Naive thymus-derived CD4-positive, alpha-beta T cell (primary cell): ENCODE measurements at regions of chr1 and their contacts with region 1.

Region 1: GRCh38 chr1:234730770-234731568 is 121.0 kb upstream of the IRF2BP2 start:
- DNase-seq: peak in 8 of 9 donors; percentile 47 to 82 (median 68)
- ATAC-seq: peak; percentile 76
- H3K4me3 ChIP-seq: no peak overlapping the region
- H3K4me3 Mint-ChIP-seq: peak overlapping the region; percentile 45 to 77 (median 64)
- H3K27ac ChIP-seq: peak overlapping the region; percentile 43
- H3K27ac Mint-ChIP-seq: peak overlapping the region; percentile 57 to 96 (median 87)
- H3K4me1 ChIP-seq: peaks cover 35 to 42% of the 10 kb centered on the region in 2 donors
- H3K4me1 Mint-ChIP-seq: peaks cover 38 to 82% (median 62%) of the 10 kb centered on the region in 7 donors
- H3K27me3 ChIP-seq: no peaks in the 10 kb centered on the region
- H3K27me3 Mint-ChIP-seq: no peaks in the 10 kb centered on the region

Region 2: GRCh38 chr1:234638832-234639799 is 91.9 kb before region 1 on chr1:
- CTCF ChIA-PET with region 1: no interaction called
- POLR2A ChIA-PET with region 1: no interaction called
- intact Hi-C with region 1: no loop called
- DNase-seq: no peak
- ATAC-seq: no peak
- H3K4me3 ChIP-seq: no peak overlapping the region
- H3K4me3 Mint-ChIP-seq: no peak overlapping the region
- H3K27ac ChIP-seq: no peak overlapping the region
- H3K27ac Mint-ChIP-seq: no peak overlapping the region
- H3K4me1 ChIP-seq: no peaks in the 10 kb centered on the region
- H3K4me1 Mint-ChIP-seq: peaks cover 0 to 10% (median 3%) of the 10 kb centered on the region in 7 donors
- H3K27me3 ChIP-seq: no peaks in the 10 kb centered on the region
- H3K27me3 Mint-ChIP-seq: peaks cover 0 to 7% (median 0%) of the 10 kb centered on the region in 5 donors

Region 3: GRCh38 chr1:234758851-234759250 is 27.9 kb after region 1 on chr1:
- CTCF ChIA-PET with region 1: no interaction called
- POLR2A ChIA-PET with region 1: interaction called, 3 read pairs
- intact Hi-C with region 1: loop called in 1 of 2 experiments (anchors 1 kb)
- DNase-seq: peak in 7 of 9 donors; percentile 59 to 85 (median 68)
- ATAC-seq: peak; percentile 87
- H3K4me3 ChIP-seq: no peak overlapping the region
- H3K4me3 Mint-ChIP-seq: peak overlapping the region in 9 of 10 donors; percentile 29 to 66 (median 49)
- H3K27ac ChIP-seq: no peak overlapping the region
- H3K27ac Mint-ChIP-seq: peak overlapping the region; percentile 57 to 97 (median 85)
- H3K4me1 ChIP-seq: peaks cover 9 to 19% of the 10 kb centered on the region in 2 donors
- H3K4me1 Mint-ChIP-seq: peaks cover 13 to 48% (median 34%) of the 10 kb centered on the region in 7 donors
- H3K27me3 ChIP-seq: no peaks in the 10 kb centered on the region
- H3K27me3 Mint-ChIP-seq: peaks cover 0 to 10% (median 0%) of the 10 kb centered on the region in 5 donors